Caco-2 (cell line): ENCODE measurements at regions of chr13 and their contacts with region 1.

Region 1: GRCh38 chr13:41694545-41695301 is 237.4 kb downstream of the RGCC start:
- DNase-seq: peak in 1 of 2 experiments; percentile 42
- H3K4me3 ChIP-seq: no peak overlapping the region
- H3K4me3 Mint-ChIP-seq: peak overlapping the region; percentile 54
- H3K27ac Mint-ChIP-seq: peak overlapping the region; percentile 94
- H3K4me1 ChIP-seq: peaks cover 57% of the 10 kb centered on the region
- H3K4me1 Mint-ChIP-seq: peaks cover 40% of the 10 kb centered on the region
- H3K27me3 ChIP-seq: no peaks in the 10 kb centered on the region
- H3K27me3 Mint-ChIP-seq: no peaks in the 10 kb centered on the region
- CTCF ChIP-seq: no peak

Region 2: GRCh38 chr13:41720839-41721561 is 26.3 kb after region 1 on chr13:
- CTCF ChIA-PET with region 1: no interaction called
- POLR2A ChIA-PET with region 1: no interaction called
- intact Hi-C with region 1: loop called (anchors 1 kb)
- DNase-seq: peak in 1 of 2 experiments; percentile 49
- H3K4me3 ChIP-seq: no peak overlapping the region
- H3K4me3 Mint-ChIP-seq: no peak overlapping the region
- H3K27ac Mint-ChIP-seq: no peak overlapping the region
- H3K4me1 ChIP-seq: peaks cover 15% of the 10 kb centered on the region
- H3K4me1 Mint-ChIP-seq: peaks cover 6% of the 10 kb centered on the region
- H3K27me3 ChIP-seq: no peaks in the 10 kb centered on the region
- H3K27me3 Mint-ChIP-seq: no peaks in the 10 kb centered on the region
- CTCF ChIP-seq: no peak

Region 3: DNA sequence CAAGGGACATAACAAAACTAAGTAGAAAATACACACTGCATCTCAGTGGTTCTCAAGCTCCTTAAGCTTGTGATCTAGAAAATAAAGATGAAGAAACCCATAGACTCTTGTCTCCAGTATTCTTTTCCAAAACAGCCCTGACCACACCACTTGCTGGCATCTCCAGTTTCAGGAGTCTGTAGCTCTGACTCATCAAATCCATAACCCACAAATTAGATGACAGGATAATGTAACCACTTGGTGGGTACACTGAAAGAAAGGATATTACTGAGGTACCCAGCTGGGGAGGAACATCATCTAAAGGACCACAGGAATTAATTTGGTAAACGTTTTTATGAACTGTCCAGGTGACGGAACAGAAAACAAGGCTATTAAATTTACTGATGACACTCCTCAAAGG is 51.5 kb after region 1 on chr13:
- CTCF ChIA-PET with region 1: no interaction called
- POLR2A ChIA-PET with region 1: no interaction called
- intact Hi-C with region 1: no loop called
- DNase-seq: no peak
- H3K4me3 ChIP-seq: no peak overlapping the region
- H3K4me3 Mint-ChIP-seq: no peak overlapping the region
- H3K27ac Mint-ChIP-seq: no peak overlapping the region
- H3K4me1 ChIP-seq: no peaks in the 10 kb centered on the region
- H3K4me1 Mint-ChIP-seq: no peaks in the 10 kb centered on the region
- H3K27me3 ChIP-seq: no peaks in the 10 kb centered on the region
- H3K27me3 Mint-ChIP-seq: no peaks in the 10 kb centered on the region
- CTCF ChIP-seq: no peak

Region 4: DNA sequence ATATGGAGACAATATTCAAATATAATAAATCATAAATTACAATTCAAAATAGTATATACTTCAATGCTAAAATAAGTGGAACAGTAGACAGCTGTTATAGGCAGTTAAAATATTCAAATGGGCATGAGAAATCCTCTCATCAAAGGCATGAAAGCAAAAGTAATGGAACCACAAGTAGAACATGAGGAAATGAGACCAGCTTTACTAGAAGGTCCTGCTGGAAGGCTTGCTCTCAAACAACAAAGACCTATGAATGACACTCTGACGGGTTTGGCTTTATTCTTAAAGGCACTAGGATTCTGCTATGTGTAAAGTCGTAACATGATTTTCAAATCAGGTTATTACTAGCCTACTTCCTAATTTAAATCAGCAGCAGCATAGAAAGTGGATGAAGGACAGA is 118.1 kb after region 1 on chr13:
- CTCF ChIA-PET with region 1: no interaction called
- POLR2A ChIA-PET with region 1: no interaction called
- intact Hi-C with region 1: no loop called
- DNase-seq: no peak
- H3K4me3 ChIP-seq: no peak overlapping the region
- H3K4me3 Mint-ChIP-seq: no peak overlapping the region
- H3K27ac Mint-ChIP-seq: no peak overlapping the region
- H3K4me1 ChIP-seq: no peaks in the 10 kb centered on the region; the same call in 1 of the 2 replicates
- H3K4me1 Mint-ChIP-seq: no peaks in the 10 kb centered on the region
- H3K27me3 ChIP-seq: no peaks in the 10 kb centered on the region
- H3K27me3 Mint-ChIP-seq: no peaks in the 10 kb centered on the region
- CTCF ChIP-seq: no peak